ENCODE measurements at regions of chr9 and their contacts with region 1.

Region 1: DNA sequence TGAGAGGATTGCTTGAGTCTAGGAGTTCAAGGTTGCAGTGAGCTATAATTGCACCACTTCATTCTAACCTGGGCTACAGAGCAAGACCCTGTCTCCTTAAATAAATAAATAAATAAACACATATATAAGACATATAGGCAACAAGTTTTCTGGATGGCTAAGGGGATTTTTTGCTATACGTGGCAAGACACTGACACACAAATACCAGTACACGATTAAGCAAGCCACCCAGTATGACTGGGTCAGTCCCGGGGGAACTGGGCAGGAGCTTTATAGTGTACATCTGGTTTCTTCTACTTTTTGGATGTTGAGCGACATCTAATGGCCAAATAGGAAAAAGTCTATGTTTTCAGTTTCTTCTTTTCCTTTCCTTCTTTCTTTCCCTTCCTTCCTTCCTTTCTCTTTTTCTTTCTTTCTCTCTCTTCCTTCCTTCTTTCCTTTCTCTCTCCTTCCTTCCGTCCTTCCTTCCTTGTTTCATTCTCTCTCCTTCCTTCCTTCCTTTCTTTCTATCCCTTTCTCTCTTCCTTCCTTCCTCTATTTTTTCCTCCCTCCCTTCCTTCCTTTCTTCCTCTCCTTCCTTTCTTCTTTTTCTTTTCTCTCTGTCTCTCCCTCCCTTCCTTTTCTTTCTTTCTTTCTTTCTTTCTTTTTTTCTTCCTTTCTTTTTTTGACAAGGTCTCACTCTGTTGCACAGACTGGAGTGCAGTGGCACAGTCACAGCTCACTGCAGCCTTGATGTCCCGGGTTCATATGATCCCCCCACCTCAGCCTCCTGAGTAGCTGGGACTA is 47.0 kb upstream of the PLIN2 start:
- DNase-seq: peak; percentile 68
- H3K4me3 ChIP-seq: no peak overlapping the region
- H3K27ac ChIP-seq: no peak overlapping the region
- H3K4me1 ChIP-seq: peaks cover 15% of the 10 kb centered on the region
- H3K27me3 ChIP-seq: no peaks in the 10 kb centered on the region
- CTCF ChIP-seq: peak; percentile 40 to 47
- POLR2A ChIP-seq: no peak

Region 2: GRCh38 chr9:18255158-18255629 is 919.1 kb before region 1 on chr9:
- CTCF ChIA-PET with region 1: no interaction called
- POLR2A ChIA-PET with region 1: no interaction called
- dilution Hi-C with region 1: no loop called
- intact Hi-C with region 1: loop called (anchors 1 kb)
- DNase-seq: peak; percentile 84
- H3K4me3 ChIP-seq: no peak overlapping the region
- H3K27ac ChIP-seq: no peak overlapping the region
- H3K4me1 ChIP-seq: peaks cover 2% of the 10 kb centered on the region
- H3K27me3 ChIP-seq: no peaks in the 10 kb centered on the region
- CTCF ChIP-seq: peak; percentile 76 to 81
- POLR2A ChIP-seq: no peak

Region 3: GRCh38 chr9:18928711-18929110 is 245.6 kb before region 1 on chr9:
- CTCF ChIA-PET with region 1: no interaction called
- POLR2A ChIA-PET with region 1: no interaction called
- dilution Hi-C with region 1: no loop called
- intact Hi-C with region 1: no loop called
- DNase-seq: no peak
- H3K4me3 ChIP-seq: no peak overlapping the region
- H3K27ac ChIP-seq: no peak overlapping the region
- H3K4me1 ChIP-seq: no peaks in the 10 kb centered on the region
- H3K27me3 ChIP-seq: no peaks in the 10 kb centered on the region
- CTCF ChIP-seq: no peak
- POLR2A ChIP-seq: no peak

Region 4: DNA sequence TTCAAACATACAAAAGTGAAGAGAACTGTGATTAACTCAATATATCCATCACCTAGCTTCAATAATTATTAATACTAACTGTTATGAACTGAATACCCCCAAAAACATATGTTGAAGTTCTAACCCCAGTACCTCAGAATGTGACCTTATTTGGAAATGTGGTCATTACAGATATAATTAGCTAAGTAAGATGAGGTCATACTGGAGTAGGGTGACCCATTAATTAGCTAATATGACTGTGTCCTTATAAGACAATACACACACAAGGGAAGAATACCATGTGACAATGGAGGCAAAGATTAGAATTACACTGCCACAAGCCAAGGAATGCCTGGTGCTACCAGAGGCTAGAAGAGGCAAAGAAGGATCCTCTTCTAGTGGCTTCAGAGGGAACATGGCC is 117.3 kb before region 1 on chr9:
- CTCF ChIA-PET with region 1: interaction called, 82 read pairs
- POLR2A ChIA-PET with region 1: no interaction called
- dilution Hi-C with region 1: no loop called
- intact Hi-C with region 1: no loop called
- DNase-seq: no peak
- H3K4me3 ChIP-seq: no peak overlapping the region
- H3K27ac ChIP-seq: no peak overlapping the region
- H3K4me1 ChIP-seq: no peaks in the 10 kb centered on the region
- H3K27me3 ChIP-seq: no peaks in the 10 kb centered on the region
- CTCF ChIP-seq: no peak
- POLR2A ChIP-seq: no peak

Region 5: GRCh38 chr9:19108038-19108437 is 66.3 kb before region 1 on chr9:
- CTCF ChIA-PET with region 1: interaction called, 18 read pairs
- POLR2A ChIA-PET with region 1: no interaction called
- dilution Hi-C with region 1: no loop called
- intact Hi-C with region 1: no loop called
- DNase-seq: no peak
- H3K4me3 ChIP-seq: no peak overlapping the region
- H3K27ac ChIP-seq: no peak overlapping the region
- H3K4me1 ChIP-seq: no peaks in the 10 kb centered on the region
- H3K27me3 ChIP-seq: no peaks in the 10 kb centered on the region
- CTCF ChIP-seq: no peak
- POLR2A ChIP-seq: no peak

Region 6: DNA sequence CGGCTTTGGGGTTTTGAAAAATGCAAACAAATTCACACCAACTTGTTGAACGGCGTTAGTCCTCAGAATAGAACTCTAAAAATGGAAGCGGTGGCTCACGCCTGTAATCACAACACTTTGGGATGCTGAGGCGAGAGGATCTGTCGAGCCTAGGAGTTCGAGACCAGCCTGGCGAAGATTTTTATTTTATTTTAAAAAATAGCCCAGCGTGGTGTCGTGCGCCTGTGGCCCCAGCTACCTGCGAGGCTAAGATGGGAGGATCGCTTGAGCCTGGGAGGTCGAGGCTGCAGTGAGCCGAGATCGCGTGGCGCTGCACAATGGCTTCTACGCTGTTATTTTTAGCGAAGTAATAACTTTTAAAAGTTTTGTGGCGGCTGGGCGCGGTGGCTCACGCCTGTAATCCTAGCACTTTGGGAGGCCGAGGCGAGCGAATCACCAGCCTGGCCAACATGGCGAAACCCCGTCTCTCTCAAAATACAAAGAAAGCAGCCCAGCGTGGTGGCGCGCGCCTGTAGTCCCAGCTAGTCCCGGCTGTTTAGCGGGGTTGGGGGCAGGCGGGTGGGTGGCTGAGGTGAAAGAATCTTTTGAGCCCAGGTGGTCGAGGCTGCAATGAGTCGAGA is 46.3 kb before region 1 on chr9:
- CTCF ChIA-PET with region 1: interaction called, 25 read pairs
- POLR2A ChIA-PET with region 1: no interaction called
- dilution Hi-C with region 1: no loop called
- intact Hi-C with region 1: loop called (anchors 2 kb)
- DNase-seq: peak; percentile 59
- H3K4me3 ChIP-seq: peak overlapping the region; percentile 43 to 87 (median 75)
- H3K27ac ChIP-seq: peak overlapping the region; percentile 76
- H3K4me1 ChIP-seq: peaks cover 29% of the 10 kb centered on the region
- H3K27me3 ChIP-seq: no peaks in the 10 kb centered on the region
- CTCF ChIP-seq: no peak
- POLR2A ChIP-seq: no peak

Region 7: DNA sequence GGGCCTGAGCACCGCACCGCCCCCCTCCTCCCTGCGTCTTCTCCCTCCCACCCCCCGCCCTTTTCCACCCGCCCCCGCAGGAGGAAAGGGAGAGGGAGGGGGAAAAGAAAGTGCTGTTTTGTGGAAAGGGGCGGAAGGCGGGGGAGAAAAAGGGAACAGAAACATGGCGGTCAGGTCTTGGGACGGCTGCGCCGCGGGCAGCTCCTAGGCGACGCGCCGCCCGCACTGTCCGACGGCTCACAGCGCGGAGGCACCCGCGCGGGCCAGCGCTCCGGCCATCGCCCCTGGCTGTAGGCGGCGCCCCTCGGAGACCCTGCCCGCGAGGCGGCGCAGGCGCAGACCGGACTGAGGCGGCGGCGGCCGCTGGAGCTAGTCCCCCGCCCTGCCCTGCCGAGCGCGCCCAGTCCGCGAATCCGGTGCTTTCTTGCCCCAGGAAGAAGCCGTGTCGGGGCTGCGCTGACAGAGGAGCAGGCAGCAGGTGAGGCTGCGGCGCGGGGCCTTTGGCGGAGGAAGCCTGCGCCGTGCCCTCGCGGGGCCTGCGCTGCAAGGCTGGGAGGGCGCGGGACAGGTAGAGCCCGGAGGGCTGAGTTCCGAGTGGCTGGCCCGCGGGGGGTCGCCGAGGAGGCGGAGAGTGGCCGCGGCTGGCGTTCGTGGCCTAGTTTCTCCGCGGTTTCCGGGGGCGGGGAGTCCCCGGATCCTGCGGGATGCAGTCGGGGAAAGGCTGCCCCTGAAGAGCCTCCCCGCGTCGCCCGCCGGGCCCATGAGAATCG is 56.2 kb after region 1 on chr9 and contains the start of gene DENND4C:
- CTCF ChIA-PET with region 1: interaction called, 20 read pairs
- POLR2A ChIA-PET with region 1: interaction called, 7 read pairs
- dilution Hi-C with region 1: no loop called
- intact Hi-C with region 1: no loop called
- DNase-seq: peak; percentile 90
- H3K4me3 ChIP-seq: peak within 1 kb of the TSS; percentile 65 to 99 (median 97)
- H3K27ac ChIP-seq: peak within 1 kb of the TSS; percentile 86
- H3K4me1 ChIP-seq: peaks cover 19% of the 10 kb centered on the region
- H3K27me3 ChIP-seq: no peaks in the 10 kb centered on the region
- CTCF ChIP-seq: no peak
- POLR2A ChIP-seq: peak; percentile 87
- total RNA-seq, gene DENND4C: 36.5 and 36.8 TPM in 2 replicates